Naive thymus-derived CD4-positive, alpha-beta T cell (primary cell): ENCODE measurements at regions of chr9 and their contacts with region 1.

Region 1: DNA sequence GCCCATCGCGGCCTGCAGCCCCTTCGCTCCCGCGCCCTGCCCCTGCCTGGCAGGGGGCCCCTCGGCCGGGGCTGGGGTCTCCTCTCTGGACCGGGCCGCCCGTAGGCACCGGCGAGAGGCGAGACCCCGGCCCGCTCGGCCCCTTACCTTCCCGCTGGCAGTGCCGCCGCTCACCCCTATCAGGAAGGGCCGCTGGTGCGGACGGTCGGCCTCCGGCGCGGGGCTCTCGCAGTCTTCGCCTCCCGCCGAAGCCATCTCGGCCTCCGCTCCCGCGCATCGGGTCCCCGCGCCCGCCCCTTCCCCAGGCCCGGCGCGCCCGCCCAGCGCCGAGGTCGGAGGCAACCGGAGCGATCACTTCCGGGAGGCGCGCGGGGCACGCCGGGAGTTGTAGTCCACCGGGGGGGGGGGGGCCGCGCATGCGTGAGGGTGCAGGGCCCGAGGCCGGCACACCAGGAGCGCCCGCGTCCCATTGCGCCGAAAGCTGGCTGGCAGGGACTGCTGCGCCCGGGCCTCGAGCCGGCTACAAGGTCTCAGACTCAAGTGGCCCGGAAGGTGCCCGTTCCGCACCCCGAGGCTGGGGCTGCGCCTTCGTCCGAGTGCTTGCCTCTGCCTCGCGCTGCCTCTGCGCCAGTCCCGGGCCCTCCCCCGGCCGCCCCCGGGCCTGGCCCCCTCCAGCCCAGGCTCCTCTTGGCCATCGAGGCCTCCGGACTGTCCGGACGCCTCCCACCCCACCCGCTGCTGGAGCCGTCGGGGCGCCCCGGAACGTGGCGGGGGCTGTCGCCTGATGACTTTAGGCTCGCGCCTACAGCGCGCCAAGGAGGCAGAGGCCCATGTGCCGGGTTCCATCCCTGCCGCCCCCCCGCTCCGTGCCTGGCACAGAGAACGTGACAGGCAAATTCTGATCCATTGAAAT is at the start of gene UCK1:
- DNase-seq: peak; percentile 58 to 84 (median 71)
- ATAC-seq: peak; percentile 97
- H3K4me3 ChIP-seq: peak within 1 kb of the TSS; percentile 63
- H3K4me3 Mint-ChIP-seq: peak within 1 kb of the TSS; percentile 59 to 84 (median 77)
- H3K27ac ChIP-seq: peak within 1 kb of the TSS; percentile 90
- H3K27ac Mint-ChIP-seq: peak within 1 kb of the TSS in 6 of 9 donors; percentile 46 to 85 (median 68)
- H3K4me1 ChIP-seq: peaks cover 21 to 30% of the 10 kb centered on the region in 2 donors
- H3K4me1 Mint-ChIP-seq: peaks cover 15 to 46% (median 34%) of the 10 kb centered on the region in 7 donors
- H3K27me3 ChIP-seq: no peaks in the 10 kb centered on the region
- H3K27me3 Mint-ChIP-seq: no peaks in the 10 kb centered on the region
- total RNA-seq, gene UCK1: 21.8 to 40.1 (median 29.3) TPM

Region 2: DNA sequence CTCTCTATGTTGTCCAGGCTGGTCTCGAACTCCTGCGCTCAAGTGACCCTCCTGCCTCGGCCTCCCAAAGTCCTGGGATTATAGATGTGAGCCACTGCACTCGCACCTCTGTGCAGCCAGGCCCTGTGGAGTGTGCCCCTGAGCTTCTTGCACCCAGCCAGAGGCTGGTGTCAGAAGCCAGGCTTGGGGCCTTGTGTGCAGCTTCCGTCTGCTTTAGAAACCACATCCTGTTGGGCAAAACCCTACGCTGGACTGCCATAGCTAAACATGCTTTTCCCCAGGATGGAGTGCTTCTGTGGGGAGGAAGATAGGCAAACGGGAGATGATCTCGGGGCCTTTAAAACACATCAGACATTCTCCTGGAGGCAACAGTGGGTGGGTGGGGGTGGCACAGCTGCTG is 54.2 kb after region 1 on chr9:
- CTCF ChIA-PET with region 1: no interaction called
- POLR2A ChIA-PET with region 1: no interaction called
- intact Hi-C with region 1: loop called in 1 of 2 experiments (anchors 5 kb)
- DNase-seq: peak; percentile 27 to 63 (median 51)
- ATAC-seq: peak; percentile 88
- H3K4me3 ChIP-seq: peak overlapping the region; percentile 22
- H3K4me3 Mint-ChIP-seq: peak overlapping the region; percentile 70 to 92 (median 77)
- H3K27ac ChIP-seq: peak overlapping the region; percentile 64
- H3K27ac Mint-ChIP-seq: peak overlapping the region; percentile 89 to 95 (median 92)
- H3K4me1 ChIP-seq: peaks cover 28 to 31% of the 10 kb centered on the region in 2 donors
- H3K4me1 Mint-ChIP-seq: peaks cover 16 to 60% (median 38%) of the 10 kb centered on the region in 7 donors
- H3K27me3 ChIP-seq: no peaks in the 10 kb centered on the region
- H3K27me3 Mint-ChIP-seq: no peaks in the 10 kb centered on the region

Region 3: DNA sequence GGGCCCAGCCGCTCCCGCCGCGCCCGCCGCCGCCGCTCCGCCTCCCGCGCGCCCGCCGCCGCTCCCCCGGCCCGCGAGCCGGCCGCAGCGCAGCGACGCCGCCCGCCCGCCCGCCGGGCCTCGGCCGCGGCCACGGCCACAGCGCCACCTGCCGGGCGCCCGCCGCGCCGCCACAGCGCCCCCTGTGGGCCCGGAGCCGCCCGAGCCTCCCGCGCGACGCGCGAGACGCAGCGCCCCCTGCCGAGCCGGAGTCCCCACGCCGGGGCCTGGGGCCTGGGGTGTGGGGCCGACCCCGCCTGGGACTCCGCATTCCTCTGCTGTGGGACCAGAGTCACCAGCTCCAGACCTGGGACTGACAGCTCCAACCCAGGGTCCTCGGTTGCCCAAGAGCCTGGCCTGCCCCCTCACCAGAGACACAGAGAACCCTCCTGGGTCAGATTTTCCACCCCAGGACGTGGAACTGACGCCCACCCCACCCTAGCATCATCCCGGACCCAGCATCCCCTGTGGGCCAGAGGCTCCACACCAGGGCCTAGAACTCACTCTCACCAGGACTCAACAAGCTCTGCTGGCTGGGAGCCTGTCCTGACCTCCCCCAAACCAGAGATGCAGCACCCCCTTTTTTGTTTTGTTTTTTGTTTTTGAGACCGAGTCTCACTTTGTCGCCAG is 208.9 kb after region 1 on chr9 and contains the start of gene RAPGEF1:
- CTCF ChIA-PET with region 1: interaction called, 3 read pairs
- POLR2A ChIA-PET with region 1: no interaction called
- intact Hi-C with region 1: loop called in 1 of 2 experiments (anchors 5 kb)
- DNase-seq: peak; percentile 65 to 99 (median 80)
- ATAC-seq: peak; percentile 94
- H3K4me3 ChIP-seq: peak within 1 kb of the TSS; percentile 80
- H3K4me3 Mint-ChIP-seq: peak within 1 kb of the TSS; percentile 80 to 96 (median 92)
- H3K27ac ChIP-seq: peak within 1 kb of the TSS; percentile 68
- H3K27ac Mint-ChIP-seq: peak within 1 kb of the TSS; percentile 80 to 97 (median 92)
- H3K4me1 ChIP-seq: peaks cover 51 to 62% of the 10 kb centered on the region in 2 donors
- H3K4me1 Mint-ChIP-seq: peaks cover 43 to 63% (median 59%) of the 10 kb centered on the region in 7 donors
- H3K27me3 ChIP-seq: no peaks in the 10 kb centered on the region
- H3K27me3 Mint-ChIP-seq: no peaks in the 10 kb centered on the region
- total RNA-seq, gene RAPGEF1: 81.1 to 181 (median 85.8) TPM

Region 4: DNA sequence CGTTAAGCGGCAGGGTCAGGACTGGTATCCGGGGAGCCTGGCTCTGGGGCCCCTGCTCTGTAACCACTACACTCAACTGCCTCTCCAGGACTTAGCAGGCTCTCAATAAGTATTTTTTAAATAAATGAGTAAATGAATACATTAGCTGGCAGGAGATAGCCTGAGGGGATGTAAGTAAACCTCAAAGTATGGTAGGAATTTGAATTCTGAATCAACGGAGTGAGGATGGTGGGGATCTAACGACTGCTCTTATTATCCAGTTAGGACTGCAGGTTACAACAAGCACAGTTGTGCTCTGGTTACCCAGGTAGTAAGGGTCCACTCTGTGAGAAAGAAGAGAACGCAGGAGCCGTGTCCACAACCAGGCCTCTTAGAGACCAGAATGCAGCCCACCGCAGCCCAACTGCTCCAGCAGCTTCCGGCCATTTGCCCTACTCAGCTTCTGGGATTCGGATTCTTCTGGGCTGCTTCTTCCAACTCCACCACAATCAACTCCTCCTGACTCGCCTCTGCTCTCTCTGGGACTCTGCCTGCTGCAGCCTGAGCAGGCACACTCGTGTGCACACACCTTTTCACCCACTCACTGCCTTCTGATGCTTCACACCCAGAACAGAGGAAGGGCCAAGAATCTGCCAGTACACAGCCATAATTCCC is 495.9 kb after region 1 on chr9:
- CTCF ChIA-PET with region 1: no interaction called
- POLR2A ChIA-PET with region 1: no interaction called
- intact Hi-C with region 1: no loop called
- DNase-seq: no peak
- ATAC-seq: no peak
- H3K4me3 ChIP-seq: no peak overlapping the region
- H3K4me3 Mint-ChIP-seq: no peak overlapping the region
- H3K27ac ChIP-seq: no peak overlapping the region
- H3K27ac Mint-ChIP-seq: no peak overlapping the region
- H3K4me1 ChIP-seq: no peaks in the 10 kb centered on the region
- H3K4me1 Mint-ChIP-seq: peaks cover 5 to 62% (median 34%) of the 10 kb centered on the region in 7 donors
- H3K27me3 ChIP-seq: no peaks in the 10 kb centered on the region
- H3K27me3 Mint-ChIP-seq: no peaks in the 10 kb centered on the region